A673 (cell line): ENCODE measurements at regions of chr2 and their contacts with region 1.

Region 1: DNA sequence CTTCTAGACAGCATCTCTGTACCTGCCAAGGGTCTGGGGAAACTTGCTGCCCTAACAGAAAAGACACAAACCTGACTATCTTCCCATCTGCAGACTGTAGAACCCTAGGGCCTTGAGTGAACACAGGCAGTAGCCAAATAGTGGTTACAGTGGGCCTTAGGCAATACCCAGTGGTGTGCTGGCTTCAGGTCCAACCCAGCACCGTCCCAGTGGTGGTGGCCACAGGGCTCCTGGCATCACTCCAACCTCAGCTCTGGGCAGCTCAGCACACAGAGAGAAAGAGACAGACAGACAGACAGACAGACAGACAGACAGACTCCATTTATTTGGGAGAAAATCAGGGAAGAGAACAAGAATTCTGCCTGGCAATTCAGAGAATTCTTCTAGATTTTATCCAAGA is 29.3 kb upstream of the UPP2 start:
- DNase-seq: no peak
- H3K4me3 ChIP-seq: no peak overlapping the region
- H3K27ac ChIP-seq: no peak overlapping the region
- H3K4me1 ChIP-seq: no peaks in the 10 kb centered on the region
- H3K27me3 ChIP-seq: no peaks in the 10 kb centered on the region
- CTCF ChIP-seq: no peak

Region 2: DNA sequence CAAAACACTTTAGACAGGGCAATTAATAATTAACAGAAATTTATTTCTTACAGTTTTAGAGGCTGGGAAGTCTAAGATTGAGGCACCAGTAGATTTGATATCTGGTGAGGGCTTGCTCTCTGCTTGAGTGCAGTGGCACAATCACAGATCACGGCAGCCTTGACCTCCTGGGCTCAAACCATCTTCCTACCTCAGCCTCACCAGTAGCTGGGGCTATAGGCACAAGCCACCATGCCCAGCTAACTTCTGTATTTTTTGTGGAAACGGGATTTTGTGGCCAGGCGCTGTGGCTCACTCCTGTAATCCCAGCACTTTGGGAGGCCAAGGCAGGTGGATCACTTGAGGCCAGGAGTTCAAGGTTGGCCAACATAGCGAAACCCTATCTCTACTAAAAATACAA is 167.3 kb before region 1 on chr2:
- CTCF ChIA-PET with region 1: no interaction called
- POLR2A ChIA-PET with region 1: no interaction called
- intact Hi-C with region 1: no loop called
- DNase-seq: no peak
- H3K4me3 ChIP-seq: no peak overlapping the region
- H3K27ac ChIP-seq: no peak overlapping the region
- H3K4me1 ChIP-seq: no peaks in the 10 kb centered on the region
- H3K27me3 ChIP-seq: no peaks in the 10 kb centered on the region
- CTCF ChIP-seq: no peak

Region 3: DNA sequence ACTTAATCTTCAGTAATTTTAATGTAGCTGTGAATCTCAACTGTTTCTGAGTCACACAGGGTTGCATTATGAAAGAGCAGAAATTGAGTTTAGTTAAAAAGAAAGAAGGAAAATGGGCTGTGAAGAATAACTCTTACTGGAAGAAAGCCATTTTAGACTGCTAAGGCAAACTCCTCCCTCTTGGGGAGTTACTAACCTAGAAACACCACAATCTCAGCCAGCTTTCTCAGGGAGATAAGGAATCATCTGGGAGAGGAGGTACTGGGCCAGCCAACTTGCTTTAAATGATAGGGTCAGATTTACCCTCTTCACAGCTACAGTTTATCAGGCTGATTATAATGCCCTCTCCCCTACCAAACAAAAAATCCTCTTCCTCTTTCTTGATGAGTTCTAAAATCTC is 264.7 kb after region 1 on chr2:
- CTCF ChIA-PET with region 1: no interaction called
- POLR2A ChIA-PET with region 1: no interaction called
- intact Hi-C with region 1: no loop called
- DNase-seq: no peak
- H3K4me3 ChIP-seq: no peak overlapping the region
- H3K27ac ChIP-seq: no peak overlapping the region
- H3K4me1 ChIP-seq: no peaks in the 10 kb centered on the region
- H3K27me3 ChIP-seq: no peaks in the 10 kb centered on the region
- CTCF ChIP-seq: no peak

Region 4: GRCh38 chr2:158656492-158657229 is 584.3 kb after region 1 on chr2:
- CTCF ChIA-PET with region 1: no interaction called
- POLR2A ChIA-PET with region 1: no interaction called
- intact Hi-C with region 1: no loop called
- DNase-seq: no peak
- H3K4me3 ChIP-seq: no peak overlapping the region
- H3K27ac ChIP-seq: no peak overlapping the region
- H3K4me1 ChIP-seq: no peaks in the 10 kb centered on the region
- H3K27me3 ChIP-seq: no peaks in the 10 kb centered on the region
- CTCF ChIP-seq: no peak

Region 5: DNA sequence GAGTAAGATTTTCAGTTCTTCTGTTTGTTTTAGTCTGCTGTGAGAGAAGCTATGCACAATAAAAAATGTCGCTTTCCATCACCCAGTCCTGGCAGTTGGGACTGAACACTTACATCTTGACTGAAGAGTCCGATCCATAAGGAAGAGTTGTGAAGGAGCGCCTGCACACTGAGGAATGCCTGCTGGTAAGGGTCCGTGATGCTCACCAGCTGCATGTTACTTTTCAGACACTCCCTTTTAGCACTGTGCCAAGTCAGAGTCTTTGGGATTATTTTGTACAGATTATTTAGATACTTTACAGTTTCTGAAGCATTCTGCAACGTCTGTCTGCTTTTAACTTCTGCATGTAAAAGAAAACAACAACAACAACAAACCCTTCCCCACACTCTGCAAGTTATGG is 1768.3 kb after region 1 on chr2:
- CTCF ChIA-PET with region 1: no interaction called
- POLR2A ChIA-PET with region 1: interaction called, 22 read pairs
- intact Hi-C with region 1: no loop called
- DNase-seq: no peak
- H3K4me3 ChIP-seq: no peak overlapping the region
- H3K27ac ChIP-seq: no peak overlapping the region
- H3K4me1 ChIP-seq: no peaks in the 10 kb centered on the region
- H3K27me3 ChIP-seq: peaks cover 25% of the 10 kb centered on the region
- CTCF ChIP-seq: no peak